MCF 10A (cell line): ENCODE measurements at regions of chr1 and their contacts with region 1.

Region 1: GRCh38 chr1:161021165-161021960 is 411 bp upstream of the F11R start:
- DNase-seq: peak; percentile 99
- H3K4me3 Mint-ChIP-seq: peak overlapping the region; percentile 80
- H3K27ac Mint-ChIP-seq: peak overlapping the region; percentile 94
- H3K4me1 Mint-ChIP-seq: peaks cover 47% of the 10 kb centered on the region
- H3K27me3 Mint-ChIP-seq: no peaks in the 10 kb centered on the region
- CTCF ChIP-seq: no peak

Region 2: GRCh38 chr1:161045750-161046571 is 24.6 kb after region 1 on chr1 and contains the start of gene USF1:
- CTCF ChIA-PET with region 1: interaction called, 17 read pairs
- POLR2A ChIA-PET with region 1: interaction called, 371 read pairs
- intact Hi-C with region 1: no loop called
- DNase-seq: peak; percentile 99
- H3K4me3 Mint-ChIP-seq: peak within 1 kb of the TSS; percentile 93
- H3K27ac Mint-ChIP-seq: peak within 1 kb of the TSS; percentile 99
- H3K4me1 Mint-ChIP-seq: peaks cover 18% of the 10 kb centered on the region
- H3K27me3 Mint-ChIP-seq: no peaks in the 10 kb centered on the region
- CTCF ChIP-seq: no peak
- total RNA-seq, gene USF1: 48.8 and 52.8 TPM in 2 replicates

Region 3: DNA sequence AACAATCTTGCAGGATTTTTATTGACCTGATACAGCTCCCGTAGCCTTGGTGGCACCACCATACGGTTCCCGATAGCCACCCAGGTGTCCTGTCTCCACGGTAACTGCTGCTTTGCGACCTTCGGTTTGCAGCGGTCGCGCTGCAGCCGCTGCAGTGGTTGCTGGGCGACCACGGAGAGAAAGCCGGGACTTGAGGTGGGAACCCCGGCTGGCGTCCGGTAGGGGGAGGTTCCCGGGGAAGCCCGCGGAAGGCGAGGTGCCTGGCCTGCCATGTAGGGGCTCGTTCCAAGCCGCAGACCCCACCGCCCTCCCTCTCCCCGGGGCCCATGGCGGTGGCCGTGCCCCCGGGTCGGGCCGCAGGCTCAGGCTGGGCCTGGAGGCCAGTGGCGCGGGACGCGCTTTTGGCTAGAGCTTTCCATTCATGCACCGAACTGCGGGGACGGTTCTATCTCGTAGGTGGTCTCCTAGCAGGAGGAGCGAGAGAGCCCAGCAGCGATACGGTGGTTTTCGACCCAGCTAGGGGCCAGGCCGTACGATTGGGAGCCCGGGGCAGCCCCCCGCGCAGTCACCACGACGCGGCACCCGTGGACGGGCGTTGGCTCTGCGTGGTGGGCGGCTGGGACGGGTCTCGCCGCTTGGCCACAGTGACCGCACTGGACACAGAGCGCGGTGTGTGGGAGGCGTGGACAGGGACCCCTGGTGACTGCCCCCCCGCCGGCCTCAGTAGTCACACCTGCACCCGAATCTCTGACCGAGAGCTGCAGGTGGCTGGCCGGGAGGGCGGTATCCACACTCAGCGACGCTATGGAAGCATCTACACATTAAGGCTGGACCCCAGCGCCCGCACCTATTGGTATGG is 77.1 kb after region 1 on chr1 and contains the start of gene KLHDC9:
- CTCF ChIA-PET with region 1: interaction called, 24 read pairs
- POLR2A ChIA-PET with region 1: interaction called, 36 read pairs
- intact Hi-C with region 1: no loop called
- DNase-seq: no peak
- H3K4me3 Mint-ChIP-seq: no peak within 1 kb of the TSS
- H3K27ac Mint-ChIP-seq: peak within 1 kb of the TSS; percentile 61
- H3K4me1 Mint-ChIP-seq: peaks cover 37% of the 10 kb centered on the region
- H3K27me3 Mint-ChIP-seq: no peaks in the 10 kb centered on the region
- CTCF ChIP-seq: no peak
- total RNA-seq, gene KLHDC9: not detected in 2 replicates

Region 4: DNA sequence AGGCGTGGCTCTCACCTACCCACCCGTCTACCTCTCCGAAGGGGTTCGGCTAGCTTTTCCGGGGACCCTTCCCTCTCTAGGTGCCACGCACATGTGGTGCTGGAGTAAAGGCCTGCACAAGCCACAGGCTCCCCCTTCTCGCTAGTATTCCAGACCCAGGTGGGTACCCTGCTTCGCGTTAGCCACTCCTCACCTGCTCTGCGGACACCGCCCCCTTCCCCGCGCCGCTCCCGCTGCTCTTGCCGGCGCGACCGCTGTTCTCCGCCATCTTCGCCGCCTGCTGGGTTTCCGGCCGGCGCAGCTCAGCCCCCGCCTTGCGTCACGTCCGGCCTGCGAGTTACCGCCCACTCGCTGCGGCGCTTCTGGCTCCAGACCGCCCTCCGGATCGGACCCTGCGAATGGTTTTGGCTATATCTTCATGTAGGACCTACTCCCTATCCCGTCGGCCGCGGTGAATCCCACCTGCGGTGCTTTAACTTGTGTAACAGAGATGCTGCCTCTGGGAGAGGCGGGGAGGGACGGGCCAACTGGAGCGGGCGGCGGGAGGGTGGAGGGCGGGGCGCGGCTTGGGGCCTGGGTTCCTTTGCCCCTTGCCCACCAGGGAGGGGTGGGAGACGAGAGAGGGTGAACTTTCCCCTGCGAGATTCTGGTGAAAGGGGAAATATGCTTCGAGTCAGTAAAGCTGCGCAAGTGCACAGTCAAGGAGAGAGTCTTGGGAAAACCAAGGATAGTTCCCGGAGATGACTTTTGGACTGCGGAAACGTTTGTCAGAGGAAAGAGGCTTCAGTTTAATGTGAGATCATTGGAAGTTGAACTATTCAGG is 96.6 kb after region 1 on chr1 and contains the starts of genes NIT1 and PFDN2:
- CTCF ChIA-PET with region 1: interaction called, 3 read pairs
- POLR2A ChIA-PET with region 1: interaction called, 112 read pairs
- intact Hi-C with region 1: no loop called
- DNase-seq: peak; percentile 85
- H3K4me3 Mint-ChIP-seq: peak within 1 kb of the TSS; percentile 97
- H3K27ac Mint-ChIP-seq: peak within 1 kb of the TSS; percentile 95
- H3K4me1 Mint-ChIP-seq: peaks cover 50% of the 10 kb centered on the region
- H3K27me3 Mint-ChIP-seq: no peaks in the 10 kb centered on the region
- CTCF ChIP-seq: no peak
- total RNA-seq, gene NIT1: 73.4 and 75.4 TPM in 2 replicates
- total RNA-seq, gene PFDN2: 514 and 683 TPM in 2 replicates

Region 5: DNA sequence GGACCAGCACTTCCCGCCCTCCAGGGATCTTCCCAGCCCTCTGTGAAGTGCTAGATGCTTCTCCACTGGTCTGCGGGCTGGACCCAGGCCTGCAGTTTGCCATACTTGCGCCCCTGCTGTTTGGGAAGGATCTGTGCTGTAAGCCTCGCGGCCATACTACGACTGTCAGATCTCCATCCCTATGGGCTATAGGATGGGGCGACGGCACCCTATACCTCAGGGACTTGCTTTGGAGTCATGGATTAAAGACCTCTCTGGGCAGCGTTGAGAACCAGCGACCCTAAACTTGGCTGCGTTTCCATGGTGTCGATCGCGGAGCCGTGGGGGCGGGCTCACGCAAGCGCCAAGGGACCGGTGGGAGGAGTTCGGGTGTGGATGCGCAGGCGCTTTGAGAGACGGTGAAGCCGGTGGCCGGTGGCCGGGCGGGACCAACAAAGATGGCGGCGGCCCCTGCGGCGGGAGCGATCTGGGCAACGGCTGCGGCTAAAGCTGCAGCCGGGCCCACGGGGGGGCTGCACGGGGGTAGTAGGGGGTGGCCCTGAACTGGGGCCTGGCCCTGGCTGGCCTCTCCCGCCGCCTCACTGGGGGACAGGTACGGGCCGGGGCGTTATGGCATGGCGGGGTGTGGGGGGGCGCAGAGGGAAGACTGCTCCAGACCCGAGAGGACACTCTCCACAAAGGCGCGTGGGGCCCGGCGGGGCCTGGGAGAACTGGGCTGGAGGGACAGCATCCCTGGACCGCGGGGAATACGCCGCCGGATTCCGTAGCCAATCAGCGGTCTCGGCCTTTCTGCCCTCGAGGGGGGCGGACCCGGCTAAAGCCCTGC is 137.9 kb after region 1 on chr1 and contains the start of gene USP21:
- CTCF ChIA-PET with region 1: interaction called, 4 read pairs
- POLR2A ChIA-PET with region 1: interaction called, 11 read pairs
- intact Hi-C with region 1: no loop called
- DNase-seq: peak; percentile 94
- H3K4me3 Mint-ChIP-seq: peak within 1 kb of the TSS; percentile 87
- H3K27ac Mint-ChIP-seq: peak within 1 kb of the TSS; percentile 94
- H3K4me1 Mint-ChIP-seq: peaks cover 45% of the 10 kb centered on the region
- H3K27me3 Mint-ChIP-seq: no peaks in the 10 kb centered on the region
- CTCF ChIP-seq: peak; percentile 55
- total RNA-seq, gene USP21: 33.8 and 36.6 TPM in 2 replicates

Region 6: DNA sequence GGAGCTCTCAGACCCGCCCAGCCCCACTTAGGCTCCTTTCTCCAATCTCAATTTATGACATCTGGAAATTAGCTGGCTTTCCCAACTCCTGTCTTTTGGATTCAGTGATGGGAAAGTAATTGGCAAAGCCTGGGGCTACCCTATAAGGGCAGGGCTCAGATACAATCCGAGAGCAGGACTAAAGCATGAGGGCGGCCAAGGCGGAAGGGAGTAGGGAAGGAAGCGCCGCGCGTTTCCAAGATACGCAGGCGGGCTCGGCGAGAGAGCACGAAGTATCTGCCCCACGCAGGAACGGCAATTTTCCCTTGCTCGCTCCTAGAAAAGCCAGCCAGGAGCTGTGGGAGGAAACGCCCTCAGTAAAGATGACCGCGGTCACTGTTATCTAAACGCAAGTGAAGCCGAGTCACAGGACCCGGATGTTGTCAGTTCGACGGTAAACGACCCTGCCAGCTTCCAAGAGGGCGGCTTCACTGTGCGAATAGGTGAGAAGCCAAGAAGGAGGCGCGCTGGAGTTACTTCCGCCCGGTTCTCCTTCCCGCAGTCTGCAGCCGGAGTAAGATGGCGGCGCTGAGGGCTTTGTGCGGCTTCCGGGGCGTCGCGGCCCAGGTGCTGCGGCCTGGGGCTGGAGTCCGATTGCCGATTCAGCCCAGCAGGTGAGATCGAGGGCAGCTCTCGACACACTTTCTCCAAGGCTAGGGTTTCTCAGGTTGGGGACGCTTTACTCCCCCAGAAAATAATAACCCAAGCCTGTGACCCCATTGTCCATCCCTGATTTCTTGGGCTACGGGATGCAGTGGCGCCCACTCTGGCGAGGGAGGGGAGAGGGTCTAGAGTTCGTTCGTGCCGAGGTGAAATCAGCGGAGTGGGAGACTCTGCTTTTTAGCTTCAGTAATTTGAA is 180.7 kb after region 1 on chr1 and contains the start of gene NDUFS2:
- CTCF ChIA-PET with region 1: no interaction called
- POLR2A ChIA-PET with region 1: interaction called, 23 read pairs
- intact Hi-C with region 1: no loop called
- DNase-seq: peak; percentile 100
- H3K4me3 Mint-ChIP-seq: peak within 1 kb of the TSS; percentile 85
- H3K27ac Mint-ChIP-seq: peak within 1 kb of the TSS; percentile 96
- H3K4me1 Mint-ChIP-seq: peaks cover 66% of the 10 kb centered on the region
- H3K27me3 Mint-ChIP-seq: no peaks in the 10 kb centered on the region
- CTCF ChIP-seq: no peak
- total RNA-seq, gene NDUFS2: 139 and 149 TPM in 2 replicates

Region 7: GRCh38 chr1:161274874-161275273 is 253.5 kb after region 1 on chr1:
- CTCF ChIA-PET with region 1: no interaction called
- POLR2A ChIA-PET with region 1: no interaction called
- intact Hi-C with region 1: no loop called
- DNase-seq: no peak
- H3K4me3 Mint-ChIP-seq: no peak overlapping the region
- H3K27ac Mint-ChIP-seq: no peak overlapping the region
- H3K4me1 Mint-ChIP-seq: no peaks in the 10 kb centered on the region
- H3K27me3 Mint-ChIP-seq: peaks cover 58% of the 10 kb centered on the region
- CTCF ChIP-seq: no peak